A673 (cell line): ENCODE measurements at regions of chr3 and their contacts with region 1.

Region 1: GRCh38 chr3:88149101-88149508 is 654 bp upstream of the C3orf38 start:
- DNase-seq: peak; percentile 71
- H3K4me3 ChIP-seq: peak overlapping the region; percentile 78
- H3K27ac ChIP-seq: peak overlapping the region; percentile 95
- H3K4me1 ChIP-seq: peaks cover 10% of the 10 kb centered on the region
- H3K27me3 ChIP-seq: no peaks in the 10 kb centered on the region
- CTCF ChIP-seq: no peak

Region 2: DNA sequence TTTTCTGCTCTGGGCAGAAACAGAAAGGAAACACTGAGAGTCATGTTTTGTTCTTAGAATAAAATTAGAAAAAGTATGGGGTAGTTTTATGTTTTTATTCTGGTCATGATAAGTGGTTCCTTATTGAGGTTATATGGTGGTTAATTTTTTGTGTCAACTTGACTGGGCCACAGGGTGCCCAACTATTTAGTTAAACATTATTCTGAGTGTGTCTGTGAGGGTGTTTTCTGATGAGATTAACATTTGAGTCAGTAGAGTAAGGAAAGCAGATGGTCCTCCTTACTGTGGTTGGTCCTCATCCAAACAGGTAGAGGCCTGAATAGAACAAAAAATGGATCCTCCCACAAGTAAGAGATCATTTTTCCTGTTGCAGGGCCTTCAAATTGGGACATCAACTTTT is 99.6 kb after region 1 on chr3:
- CTCF ChIA-PET with region 1: no interaction called
- POLR2A ChIA-PET with region 1: no interaction called
- intact Hi-C with region 1: no loop called
- DNase-seq: no peak
- H3K4me3 ChIP-seq: no peak overlapping the region
- H3K27ac ChIP-seq: no peak overlapping the region
- H3K4me1 ChIP-seq: no peaks in the 10 kb centered on the region
- H3K27me3 ChIP-seq: no peaks in the 10 kb centered on the region
- CTCF ChIP-seq: no peak

Region 3: GRCh38 chr3:88732186-88732585 is 583.1 kb after region 1 on chr3:
- CTCF ChIA-PET with region 1: no interaction called
- POLR2A ChIA-PET with region 1: interaction called, 14 read pairs
- intact Hi-C with region 1: no loop called
- DNase-seq: no peak
- H3K4me3 ChIP-seq: no peak overlapping the region
- H3K27ac ChIP-seq: no peak overlapping the region
- H3K4me1 ChIP-seq: no peaks in the 10 kb centered on the region
- H3K27me3 ChIP-seq: no peaks in the 10 kb centered on the region
- CTCF ChIP-seq: no peak